Esophagus squamous epithelium (tissue), 5 donors: ENCODE measurements at regions of chr16 and their contacts with region 1.

Region 1: DNA sequence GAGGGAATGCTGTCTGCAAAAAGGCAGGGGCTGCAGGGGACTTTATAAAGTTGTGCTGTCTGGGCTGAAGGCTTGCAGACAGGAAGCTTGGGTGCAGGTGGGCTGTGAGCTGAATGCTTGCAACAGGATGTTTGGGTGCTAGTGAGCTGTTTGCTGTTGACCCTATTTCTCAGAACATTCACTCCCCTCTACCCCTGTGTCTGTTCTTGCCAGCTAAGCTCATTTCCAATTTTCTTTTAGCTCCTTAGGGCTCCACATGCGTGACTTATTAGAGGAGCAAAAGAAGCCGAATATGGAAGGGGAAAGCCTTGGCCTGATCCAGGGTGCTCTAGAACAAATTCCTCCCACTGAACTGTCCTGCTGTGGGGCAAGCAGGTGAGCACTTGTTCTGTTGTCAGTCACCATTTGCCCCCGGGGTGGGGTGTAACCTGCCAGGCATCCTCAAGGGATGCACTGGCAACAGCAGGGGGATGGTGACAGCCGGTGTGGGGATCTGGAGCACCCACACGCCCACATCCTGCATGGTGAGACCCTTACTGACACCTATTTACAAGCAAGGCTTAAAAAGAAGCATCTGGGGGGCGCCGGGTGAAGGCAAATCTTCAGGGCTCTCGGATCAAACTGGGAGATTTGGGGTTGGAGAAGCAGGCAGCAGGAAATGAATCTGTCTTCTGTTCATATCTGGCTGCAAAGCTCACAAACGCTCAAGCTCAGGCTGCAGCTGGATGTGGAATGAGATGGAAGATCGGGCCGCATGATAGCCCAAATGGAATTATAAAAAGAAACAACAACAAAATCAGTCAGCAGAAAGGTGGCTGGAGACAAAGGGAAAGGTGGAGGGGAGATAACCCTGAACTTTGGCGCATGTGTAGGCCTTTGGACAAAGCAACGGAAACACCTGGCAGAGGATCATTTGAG is 21.1 kb upstream of the NUP93 start:
- DNase-seq: no peak
- H3K4me3 ChIP-seq: peak overlapping the region in 1 of 4 donors; percentile 2
- H3K27ac ChIP-seq: no peak overlapping the region
- H3K4me1 ChIP-seq: peaks cover 0 to 13% (median 0%) of the 10 kb centered on the region in 3 donors
- H3K27me3 ChIP-seq: no peaks in the 10 kb centered on the region
- CTCF ChIP-seq: no peak
- POLR2A ChIP-seq: no peak

Region 2: GRCh38 chr16:56519459-56520250 is 189.1 kb before region 1 on chr16 and contains the start of gene BBS2:
- intact Hi-C with region 1: loop called (anchors 10 kb)
- DNase-seq: peak; percentile 30
- H3K4me3 ChIP-seq: peak within 1 kb of the TSS; percentile 72 to 96 (median 92)
- H3K27ac ChIP-seq: peak within 1 kb of the TSS; percentile 87 to 96 (median 94)
- H3K4me1 ChIP-seq: peaks cover 20 to 56% (median 37%) of the 10 kb centered on the region in 3 donors
- H3K27me3 ChIP-seq: no peaks in the 10 kb centered on the region
- CTCF ChIP-seq: peak in 2 of 6 experiments; percentile 35 to 52
- POLR2A ChIP-seq: peak in 3 of 4 donors; percentile 77 to 87 (median 82)
- total RNA-seq, gene BBS2: 15.2 to 60.8 (median 31.1) TPM

Region 3: DNA sequence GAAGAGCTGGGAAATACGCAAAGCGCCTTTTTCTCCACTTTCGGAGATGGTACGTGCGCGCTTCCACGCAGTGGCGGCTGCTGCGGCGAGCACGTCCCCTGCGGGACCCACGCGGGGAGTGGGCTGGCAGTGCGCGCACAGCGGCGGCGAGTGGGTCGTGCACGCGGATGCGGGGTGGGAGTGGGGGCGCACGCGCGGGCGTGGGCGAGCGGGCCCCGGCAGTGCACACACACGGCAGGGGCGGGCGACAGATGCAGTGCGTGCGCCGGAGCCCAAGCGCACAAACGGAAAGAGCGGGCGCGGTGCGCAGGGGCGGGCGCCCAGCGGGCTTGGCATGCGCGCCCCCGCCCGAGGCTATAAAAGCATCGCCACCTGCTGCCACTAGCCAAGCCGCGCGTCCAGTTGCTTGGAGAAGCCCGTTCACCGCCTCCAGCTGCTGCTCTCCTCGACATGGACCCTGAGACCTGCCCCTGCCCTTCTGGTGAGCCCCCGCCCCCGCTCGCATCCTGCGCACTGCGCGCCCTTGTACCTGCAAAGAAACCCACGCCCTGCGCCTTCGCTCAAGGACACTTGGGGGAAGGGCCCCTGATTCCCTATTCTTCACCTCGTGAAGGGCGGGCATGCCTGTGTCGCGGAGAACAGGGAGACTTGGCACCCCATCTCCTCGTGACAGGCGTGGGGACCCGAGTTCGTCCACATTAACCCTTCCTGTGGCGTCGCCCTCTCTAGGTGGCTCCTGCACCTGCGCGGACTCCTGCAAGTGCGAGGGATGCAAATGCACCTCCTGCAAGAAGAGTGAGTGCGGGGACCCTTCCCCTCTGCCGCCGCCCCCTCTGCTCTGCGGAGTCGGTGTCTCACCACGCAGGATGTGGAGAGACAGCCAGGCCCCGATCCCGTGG is 119.4 kb before region 1 on chr16 and contains the start of gene MT3:
- intact Hi-C with region 1: loop called (anchors 10 kb)
- DNase-seq: no peak
- H3K4me3 ChIP-seq: peak within 1 kb of the TSS; percentile 23 to 65 (median 38)
- H3K27ac ChIP-seq: no peak within 1 kb of the TSS
- H3K4me1 ChIP-seq: peaks cover 8 to 13% (median 8%) of the 10 kb centered on the region in 3 donors
- H3K27me3 ChIP-seq: peaks cover 6 to 69% (median 11%) of the 10 kb centered on the region in 4 donors
- CTCF ChIP-seq: no peak
- POLR2A ChIP-seq: no peak
- total RNA-seq, gene MT3: not detected

Region 4: GRCh38 chr16:56643080-56643778 is 65.6 kb before region 1 on chr16:
- intact Hi-C with region 1: no loop called
- DNase-seq: no peak
- H3K4me3 ChIP-seq: peak overlapping the region in 3 of 4 donors; percentile 39 to 62 (median 43)
- H3K27ac ChIP-seq: peak overlapping the region in 3 of 4 donors; percentile 45 to 50 (median 46)
- H3K4me1 ChIP-seq: peaks cover 15 to 25% (median 24%) of the 10 kb centered on the region in 3 donors
- H3K27me3 ChIP-seq: peaks cover 0 to 97% (median 5%) of the 10 kb centered on the region in 4 donors
- CTCF ChIP-seq: peak; percentile 30 to 56 (median 50)
- POLR2A ChIP-seq: no peak